ENCODE measurements at regions of chr17 and their contacts with region 1.

Region 1: GRCh38 chr17:65556014-65556909 is 5.2 kb downstream of the AXIN2 start:
- DNase-seq: peak; percentile 77 to 87 (median 85)
- H3K4me3 ChIP-seq: peak overlapping the region; percentile 86
- H3K27ac ChIP-seq: no peak overlapping the region
- H3K4me1 ChIP-seq: peaks cover 28% of the 10 kb centered on the region
- H3K27me3 ChIP-seq: no peaks in the 10 kb centered on the region
- CTCF ChIP-seq: peak; percentile 48 to 63 (median 59)
- EP300 ChIP-seq: no peak
- POLR2A ChIP-seq: no peak

Region 2: DNA sequence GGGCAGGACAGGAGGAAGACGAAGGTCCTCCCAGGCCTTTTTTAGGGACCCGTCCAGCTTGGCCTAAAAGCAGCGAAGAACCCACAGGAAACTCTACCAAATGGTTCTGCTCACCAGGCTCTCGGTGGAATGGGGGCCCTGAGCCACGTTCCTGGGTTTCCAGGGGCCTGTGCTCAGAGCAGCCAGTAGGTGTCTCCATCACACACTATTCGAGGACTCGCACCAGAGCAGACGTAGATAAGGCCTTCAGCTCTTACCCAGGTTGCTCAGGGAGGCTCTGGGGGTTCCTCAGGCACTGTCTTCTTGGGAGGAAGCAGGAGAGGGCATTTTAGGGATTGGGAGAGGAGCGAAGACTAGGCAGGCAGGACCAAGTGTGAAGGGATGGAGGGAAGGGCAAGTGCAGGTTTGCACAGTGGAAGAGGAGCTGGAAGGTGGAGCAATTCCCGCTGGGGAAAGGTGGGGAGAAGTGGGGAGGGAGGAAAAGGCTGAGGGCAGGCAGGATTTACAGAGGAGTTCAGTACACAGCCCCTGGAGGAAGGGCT is 262.0 kb before region 1 on chr17:
- intact Hi-C with region 1: loop called in 2 of 4 experiments (anchors 5 to 10 kb)
- DNase-seq: peak; percentile 62 to 75 (median 66)
- H3K4me3 ChIP-seq: no peak overlapping the region
- H3K27ac ChIP-seq: no peak overlapping the region
- H3K4me1 ChIP-seq: peaks cover 1% of the 10 kb centered on the region
- H3K27me3 ChIP-seq: no peaks in the 10 kb centered on the region
- CTCF ChIP-seq: peak; percentile 52 to 67 (median 59)
- EP300 ChIP-seq: no peak
- POLR2A ChIP-seq: no peak

Region 3: GRCh38 chr17:65463242-65463641 is 93.0 kb before region 1 on chr17:
- intact Hi-C with region 1: loop called in 1 of 4 experiments (anchors 10 kb)
- DNase-seq: peak in 4 of 5 donors; percentile 58 to 81 (median 72)
- H3K4me3 ChIP-seq: no peak overlapping the region
- H3K27ac ChIP-seq: no peak overlapping the region
- H3K4me1 ChIP-seq: peaks cover 2% of the 10 kb centered on the region
- H3K27me3 ChIP-seq: no peaks in the 10 kb centered on the region
- CTCF ChIP-seq: no peak
- EP300 ChIP-seq: peak; percentile 93
- POLR2A ChIP-seq: no peak

Measured in ovary (tissue), 10 donors.